Esophagus muscularis mucosa (tissue), 4 donors: ENCODE measurements at regions of chr1 and their contacts with region 1.

Region 1: GRCh38 chr1:115138968-115139367 is 49.7 kb upstream of the TSPAN2 start:
- DNase-seq: peak; percentile 96
- H3K4me3 ChIP-seq: no peak overlapping the region
- H3K27ac ChIP-seq: no peak overlapping the region
- H3K4me1 ChIP-seq: peaks cover 13 to 27% (median 22%) of the 10 kb centered on the region in 4 donors
- H3K27me3 ChIP-seq: peaks cover 0 to 3% (median 0%) of the 10 kb centered on the region in 4 donors
- CTCF ChIP-seq: peak; percentile 87 to 92 (median 90)
- EP300 ChIP-seq: no peak
- POLR2A ChIP-seq: no peak

Region 2: DNA sequence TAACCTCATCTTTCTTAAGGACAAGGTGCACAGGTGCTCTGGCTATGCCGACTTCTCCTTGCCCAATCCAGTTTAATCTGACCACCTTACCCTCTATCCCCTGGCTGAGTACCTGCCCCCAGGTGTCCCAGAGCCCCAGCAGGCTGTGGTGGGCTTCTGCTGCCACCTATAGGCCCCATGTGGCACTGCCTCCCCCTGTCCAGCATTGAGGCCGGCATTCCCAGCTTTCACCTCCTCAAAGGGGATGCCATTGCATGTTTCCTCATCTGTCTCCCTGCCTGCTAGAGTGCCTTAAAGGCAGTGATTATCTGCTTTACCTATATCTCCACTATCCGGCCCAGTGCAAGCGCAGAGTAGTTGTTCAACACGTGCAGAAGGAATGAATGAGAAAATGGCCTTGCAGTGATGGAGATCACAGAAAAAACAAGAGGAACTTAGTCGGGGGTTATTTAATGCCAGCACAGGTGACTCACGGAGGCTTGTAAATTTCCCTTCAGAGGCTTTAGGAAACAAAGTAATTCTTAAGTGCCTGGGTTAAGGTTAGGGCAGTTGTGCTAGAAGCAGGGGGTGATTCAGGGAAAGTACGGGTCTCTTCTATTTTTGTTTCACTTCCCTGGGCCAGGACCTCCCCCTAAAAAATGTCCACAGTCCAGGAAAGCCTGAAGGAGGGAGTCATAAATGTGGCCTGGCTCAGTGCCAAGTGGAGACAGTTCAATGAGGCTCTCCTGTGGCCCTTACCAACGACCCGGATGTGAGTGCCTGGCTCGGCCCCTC is 330.9 kb after region 1 on chr1:
- intact Hi-C with region 1: loop called (anchors 2 kb)
- DNase-seq: no peak
- H3K4me3 ChIP-seq: no peak overlapping the region
- H3K27ac ChIP-seq: no peak overlapping the region
- H3K4me1 ChIP-seq: no peaks in the 10 kb centered on the region
- H3K27me3 ChIP-seq: no peaks in the 10 kb centered on the region
- CTCF ChIP-seq: peak; percentile 70 to 89 (median 82)
- EP300 ChIP-seq: no peak
- POLR2A ChIP-seq: no peak

Region 3: DNA sequence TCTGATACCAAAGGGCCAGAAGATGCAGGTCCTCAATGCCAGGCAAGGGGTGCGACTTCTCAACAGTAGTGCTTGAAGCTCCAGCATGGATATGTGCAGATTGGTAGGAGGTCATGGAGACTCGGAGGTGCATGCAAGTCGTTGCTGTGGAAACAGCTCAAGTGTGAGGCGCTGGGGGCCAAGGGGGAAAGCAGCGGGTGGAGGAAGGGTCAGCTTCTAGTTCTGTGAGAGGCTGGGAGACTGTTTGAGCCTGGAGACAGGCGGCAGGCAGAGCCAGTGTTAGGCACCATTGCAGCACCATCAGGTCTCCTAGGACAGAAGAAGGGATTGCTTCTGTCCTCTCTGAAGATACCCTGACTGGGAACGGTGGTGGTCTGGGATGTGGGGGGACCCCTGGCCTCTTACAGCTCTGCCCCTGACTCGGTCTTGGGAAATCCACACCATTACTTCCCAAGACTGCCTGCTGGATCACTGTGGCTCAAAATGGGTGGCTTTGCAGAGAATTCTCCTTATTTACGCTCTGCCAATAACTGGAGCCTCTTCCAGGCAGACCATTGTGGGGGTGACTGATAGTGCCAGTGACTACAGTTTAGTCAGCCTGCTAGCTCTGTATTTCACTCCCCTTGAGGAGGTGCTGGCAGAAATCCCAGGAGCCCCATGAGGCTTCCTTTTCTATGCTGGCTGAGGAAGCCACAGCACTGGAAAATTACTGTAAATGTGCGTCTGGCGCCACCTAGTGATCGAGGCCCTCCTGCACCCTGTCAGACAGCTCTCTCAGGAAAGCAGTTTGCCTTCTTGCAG is 456.5 kb after region 1 on chr1:
- intact Hi-C with region 1: loop called (anchors 2 kb)
- DNase-seq: no peak
- H3K4me3 ChIP-seq: no peak overlapping the region
- H3K27ac ChIP-seq: no peak overlapping the region
- H3K4me1 ChIP-seq: peaks cover 4 to 14% (median 6%) of the 10 kb centered on the region in 4 donors
- H3K27me3 ChIP-seq: no peaks in the 10 kb centered on the region
- CTCF ChIP-seq: peak; percentile 86 to 93 (median 87)
- EP300 ChIP-seq: no peak
- POLR2A ChIP-seq: no peak

Region 4: DNA sequence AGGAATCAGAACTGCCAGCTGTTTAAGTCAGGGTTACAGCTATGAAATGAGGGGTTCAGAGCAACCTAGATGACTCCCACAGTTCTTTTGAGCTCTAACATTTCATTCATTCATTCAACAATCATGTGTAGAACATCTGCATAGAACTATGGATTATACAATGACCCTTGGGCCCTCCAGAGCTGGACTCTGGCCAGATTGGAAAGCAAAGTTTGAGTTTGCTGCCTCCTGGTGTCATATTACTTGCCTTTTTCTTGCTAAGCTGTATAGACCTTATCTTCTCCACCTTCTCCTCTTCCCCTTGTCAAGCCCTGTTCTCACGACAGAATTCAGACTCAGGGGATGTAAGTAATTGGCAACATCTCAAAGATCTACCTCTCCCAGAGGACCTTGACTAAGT is 625.6 kb after region 1 on chr1:
- intact Hi-C with region 1: loop called (anchors 10 kb)
- DNase-seq: peak; percentile 75
- H3K4me3 ChIP-seq: no peak overlapping the region
- H3K27ac ChIP-seq: peak overlapping the region; percentile 19 to 86 (median 52)
- H3K4me1 ChIP-seq: peaks cover 15 to 47% (median 31%) of the 10 kb centered on the region in 4 donors
- H3K27me3 ChIP-seq: no peaks in the 10 kb centered on the region
- CTCF ChIP-seq: peak; percentile 41 to 54 (median 46)
- EP300 ChIP-seq: no peak
- POLR2A ChIP-seq: no peak